CD8-positive, alpha-beta T cell (primary cell): ENCODE measurements at regions of chr2 and their contacts with region 1.

Region 1: DNA sequence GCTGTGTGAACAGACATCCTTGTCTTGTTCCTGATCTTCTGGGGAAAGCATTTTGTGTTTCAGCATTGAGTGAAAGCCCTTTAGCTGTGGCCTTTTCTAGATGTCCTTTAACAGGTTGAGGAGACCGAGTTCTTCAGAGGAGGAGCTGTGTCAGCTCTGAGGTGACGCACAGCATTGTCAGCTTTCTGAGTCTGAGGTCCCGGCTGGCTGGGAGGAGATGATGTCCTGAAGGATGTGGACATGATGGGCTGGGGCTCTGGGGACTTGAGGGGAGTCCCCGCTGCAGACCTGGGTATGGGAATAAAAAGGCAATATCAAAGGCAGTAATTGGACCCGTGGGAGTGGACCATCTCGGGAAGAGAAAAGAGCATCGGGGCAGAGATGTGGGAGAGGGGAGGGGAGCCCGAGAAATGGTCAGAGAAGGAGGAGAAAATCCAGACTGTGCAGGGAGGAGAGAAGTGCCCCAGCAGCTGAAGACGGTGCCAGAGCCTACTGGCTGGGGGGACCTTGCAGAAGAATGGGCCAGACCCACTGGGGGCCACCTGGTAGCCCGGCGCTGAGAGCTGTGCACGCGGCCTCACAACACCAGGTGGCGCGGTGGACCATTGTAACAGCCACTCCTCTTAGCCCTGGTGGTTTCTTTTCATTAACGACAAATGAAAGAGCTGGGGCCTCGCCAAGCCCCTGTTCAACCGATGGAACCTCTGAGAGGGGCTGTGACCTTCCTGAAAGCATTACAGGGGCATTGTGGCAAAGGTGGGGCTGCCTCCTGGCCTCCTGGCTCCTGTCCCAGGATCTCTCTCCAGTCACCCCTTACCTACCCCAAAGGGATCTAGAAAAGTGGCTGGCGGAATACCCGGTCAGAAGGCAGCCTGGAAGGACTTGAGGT is 61.6 kb downstream of the ST3GAL5 start:
- DNase-seq: peak; percentile 71 to 90 (median 82)
- ATAC-seq: peak; percentile 99
- H3K4me3 ChIP-seq: peak overlapping the region; percentile 1 to 37
- H3K4me3 Mint-ChIP-seq: no peak overlapping the region
- H3K27ac ChIP-seq: no peak overlapping the region
- H3K27ac Mint-ChIP-seq: peak overlapping the region; percentile 62
- H3K4me1 ChIP-seq: peaks cover 8% of the 10 kb centered on the region
- H3K4me1 Mint-ChIP-seq: peaks cover 15% of the 10 kb centered on the region
- H3K27me3 ChIP-seq: no peaks in the 10 kb centered on the region
- H3K27me3 Mint-ChIP-seq: no peaks in the 10 kb centered on the region
- CTCF ChIP-seq: peak; percentile 83

Region 2: DNA sequence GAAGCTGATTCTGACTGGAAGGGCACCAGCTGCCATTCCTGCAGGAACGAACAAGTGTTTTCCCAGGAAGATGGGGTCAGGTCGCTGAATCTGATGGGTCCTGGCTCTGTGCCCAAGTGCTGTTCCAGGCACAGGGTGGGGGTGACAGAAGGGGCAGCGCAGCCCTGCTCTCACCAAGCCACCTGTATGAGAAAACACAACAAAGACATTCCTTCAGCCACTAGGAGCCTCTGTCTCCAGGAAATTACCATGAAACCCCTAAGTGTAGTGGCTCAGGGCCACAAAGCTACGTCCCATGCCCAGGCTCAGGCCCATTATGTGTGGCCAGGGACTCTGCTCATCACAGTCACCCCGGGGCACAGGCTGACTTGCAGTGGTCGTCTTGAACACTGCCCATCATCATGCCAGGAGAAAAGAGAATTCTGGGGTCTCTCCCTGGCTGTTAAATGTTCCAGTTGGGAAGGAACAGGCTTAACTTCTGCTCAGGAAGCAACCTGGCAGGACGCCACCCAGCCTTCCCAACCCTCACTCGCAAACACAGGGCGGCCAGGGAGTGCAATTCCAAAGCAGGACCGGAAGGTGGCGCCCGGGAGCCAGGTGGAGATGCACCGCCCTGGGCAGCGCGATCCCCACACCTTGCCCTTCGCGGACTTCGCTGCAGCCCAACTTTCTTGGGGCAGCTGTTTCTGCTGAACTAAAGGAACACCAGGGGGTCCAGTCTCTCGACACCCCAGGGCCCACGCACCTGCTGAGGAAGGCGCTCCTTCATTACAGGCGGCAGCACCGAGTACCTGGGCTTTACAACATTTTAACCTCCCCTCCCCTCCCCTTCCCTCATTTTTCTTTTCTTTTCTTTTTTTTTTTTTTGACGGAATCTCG is 148.2 kb before region 1 on chr2:
- CTCF ChIA-PET with region 1: no interaction called
- POLR2A ChIA-PET with region 1: no interaction called
- intact Hi-C with region 1: no loop called
- DNase-seq: peak; percentile 59 to 85 (median 75)
- ATAC-seq: peak; percentile 98
- H3K4me3 ChIP-seq: peak overlapping the region in 1 of 2 experiments; percentile 19
- H3K4me3 Mint-ChIP-seq: no peak overlapping the region
- H3K27ac ChIP-seq: no peak overlapping the region
- H3K27ac Mint-ChIP-seq: no peak overlapping the region
- H3K4me1 ChIP-seq: peaks cover 7% of the 10 kb centered on the region
- H3K4me1 Mint-ChIP-seq: no peaks in the 10 kb centered on the region
- H3K27me3 ChIP-seq: no peaks in the 10 kb centered on the region
- H3K27me3 Mint-ChIP-seq: peaks cover 2% of the 10 kb centered on the region
- CTCF ChIP-seq: peak; percentile 91

Region 3: DNA sequence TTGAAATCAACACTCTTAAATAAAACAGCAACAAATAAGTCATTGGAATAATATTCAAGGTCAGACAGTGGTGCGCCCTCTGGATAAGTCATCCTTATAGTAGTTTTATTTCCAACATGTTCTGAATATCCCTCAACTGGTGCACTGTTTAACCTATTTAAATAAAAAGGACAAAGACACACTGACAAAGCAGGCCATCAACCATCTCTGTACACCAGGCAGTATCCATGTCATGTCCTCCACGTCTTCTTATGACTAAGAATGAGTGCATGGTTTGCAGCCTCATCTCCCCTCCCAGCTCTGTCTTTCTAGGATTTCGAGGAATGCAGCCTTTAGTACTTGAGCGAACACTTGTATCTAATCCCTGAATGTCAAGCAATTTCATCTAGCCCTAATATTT is 19.2 kb after region 1 on chr2:
- CTCF ChIA-PET with region 1: interaction called, 32 read pairs
- POLR2A ChIA-PET with region 1: no interaction called
- intact Hi-C with region 1: no loop called
- DNase-seq: no peak
- ATAC-seq: no peak
- H3K4me3 ChIP-seq: no peak overlapping the region
- H3K4me3 Mint-ChIP-seq: no peak overlapping the region
- H3K27ac ChIP-seq: no peak overlapping the region
- H3K27ac Mint-ChIP-seq: no peak overlapping the region
- H3K4me1 ChIP-seq: peaks cover 20% of the 10 kb centered on the region
- H3K4me1 Mint-ChIP-seq: peaks cover 30% of the 10 kb centered on the region
- H3K27me3 ChIP-seq: no peaks in the 10 kb centered on the region
- H3K27me3 Mint-ChIP-seq: no peaks in the 10 kb centered on the region
- CTCF ChIP-seq: no peak

Region 4: DNA sequence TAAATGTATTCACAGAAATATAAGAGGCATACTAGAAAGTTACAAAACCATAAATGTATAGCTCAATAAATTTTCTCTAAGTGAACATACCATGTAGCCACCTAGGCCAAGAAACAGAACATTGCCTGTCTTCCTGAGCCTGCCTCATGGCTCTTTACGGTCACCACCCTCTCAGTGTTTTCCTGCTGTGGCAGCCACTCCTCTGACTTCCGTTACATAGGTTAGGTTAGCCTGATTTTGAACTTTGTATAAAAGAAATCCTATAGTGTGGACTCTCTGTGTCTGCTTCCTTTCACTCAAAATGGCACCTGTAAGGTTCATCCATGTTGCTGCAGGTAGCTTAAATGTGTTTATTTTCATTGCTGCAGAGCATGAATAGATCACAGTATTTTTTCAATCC is 73.1 kb after region 1 on chr2:
- CTCF ChIA-PET with region 1: interaction called, 11 read pairs
- POLR2A ChIA-PET with region 1: no interaction called
- intact Hi-C with region 1: no loop called
- DNase-seq: peak in 1 of 9 experiments; percentile 40
- ATAC-seq: peak; percentile 58
- H3K4me3 ChIP-seq: no peak overlapping the region
- H3K4me3 Mint-ChIP-seq: no peak overlapping the region
- H3K27ac ChIP-seq: peak overlapping the region in 1 of 2 experiments; percentile 32
- H3K27ac Mint-ChIP-seq: peak overlapping the region; percentile 70
- H3K4me1 ChIP-seq: peaks cover 23% of the 10 kb centered on the region
- H3K4me1 Mint-ChIP-seq: peaks cover 33% of the 10 kb centered on the region
- H3K27me3 ChIP-seq: no peaks in the 10 kb centered on the region
- H3K27me3 Mint-ChIP-seq: no peaks in the 10 kb centered on the region
- CTCF ChIP-seq: no peak

Region 5: DNA sequence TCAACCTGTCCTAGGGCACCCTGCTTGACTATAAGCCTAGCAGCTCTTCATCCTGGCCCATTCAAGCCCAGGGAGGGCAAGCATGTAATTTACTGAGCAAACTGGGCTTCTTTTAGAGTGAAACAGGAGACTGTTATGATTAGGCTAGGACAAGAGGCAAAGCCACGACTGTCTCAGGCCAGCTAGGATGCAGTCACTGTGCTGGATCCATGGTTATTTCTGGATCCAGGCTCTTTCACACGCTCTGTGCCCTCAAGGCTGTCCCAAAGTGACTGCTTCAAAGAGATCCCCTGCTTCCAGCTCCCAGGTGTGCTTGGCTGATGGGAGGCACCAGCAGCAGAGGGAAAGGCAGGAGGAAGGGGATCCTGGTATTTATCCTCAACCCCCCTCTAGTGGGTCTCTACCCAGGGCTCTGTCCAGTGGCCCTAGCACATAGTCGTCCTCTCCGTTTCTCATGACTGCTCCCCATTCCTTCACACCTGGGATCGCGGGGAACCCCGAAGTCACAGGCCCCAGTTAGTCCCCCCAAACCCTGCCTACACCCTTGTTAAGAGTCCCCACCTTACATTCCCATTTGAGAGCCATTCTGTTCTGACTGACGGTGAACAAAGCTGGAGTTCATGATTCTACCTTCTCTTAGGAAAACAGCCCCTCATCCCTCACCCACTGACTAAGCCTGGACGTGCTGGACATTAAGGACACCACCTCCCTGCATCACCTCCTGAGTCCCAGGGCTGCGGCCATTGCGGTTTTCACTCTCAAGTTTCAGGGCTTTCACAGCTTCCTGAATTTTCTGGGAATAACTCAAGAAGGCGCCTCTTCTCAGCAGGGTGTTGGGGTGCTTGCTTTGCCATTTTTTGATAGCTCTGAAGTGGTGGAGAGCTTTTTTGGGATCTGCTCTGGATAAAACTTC is 215.3 kb after region 1 on chr2:
- CTCF ChIA-PET with region 1: interaction called, 26 read pairs
- POLR2A ChIA-PET with region 1: no interaction called
- intact Hi-C with region 1: no loop called
- DNase-seq: peak in 2 of 9 experiments; percentile 7 to 41
- ATAC-seq: no peak
- H3K4me3 ChIP-seq: no peak overlapping the region
- H3K4me3 Mint-ChIP-seq: no peak overlapping the region
- H3K27ac ChIP-seq: peak overlapping the region in 1 of 2 experiments; percentile 20
- H3K27ac Mint-ChIP-seq: peak overlapping the region; percentile 100
- H3K4me1 ChIP-seq: peaks cover 43% of the 10 kb centered on the region
- H3K4me1 Mint-ChIP-seq: peaks cover 45% of the 10 kb centered on the region
- H3K27me3 ChIP-seq: no peaks in the 10 kb centered on the region
- H3K27me3 Mint-ChIP-seq: no peaks in the 10 kb centered on the region
- CTCF ChIP-seq: no peak

Region 6: DNA sequence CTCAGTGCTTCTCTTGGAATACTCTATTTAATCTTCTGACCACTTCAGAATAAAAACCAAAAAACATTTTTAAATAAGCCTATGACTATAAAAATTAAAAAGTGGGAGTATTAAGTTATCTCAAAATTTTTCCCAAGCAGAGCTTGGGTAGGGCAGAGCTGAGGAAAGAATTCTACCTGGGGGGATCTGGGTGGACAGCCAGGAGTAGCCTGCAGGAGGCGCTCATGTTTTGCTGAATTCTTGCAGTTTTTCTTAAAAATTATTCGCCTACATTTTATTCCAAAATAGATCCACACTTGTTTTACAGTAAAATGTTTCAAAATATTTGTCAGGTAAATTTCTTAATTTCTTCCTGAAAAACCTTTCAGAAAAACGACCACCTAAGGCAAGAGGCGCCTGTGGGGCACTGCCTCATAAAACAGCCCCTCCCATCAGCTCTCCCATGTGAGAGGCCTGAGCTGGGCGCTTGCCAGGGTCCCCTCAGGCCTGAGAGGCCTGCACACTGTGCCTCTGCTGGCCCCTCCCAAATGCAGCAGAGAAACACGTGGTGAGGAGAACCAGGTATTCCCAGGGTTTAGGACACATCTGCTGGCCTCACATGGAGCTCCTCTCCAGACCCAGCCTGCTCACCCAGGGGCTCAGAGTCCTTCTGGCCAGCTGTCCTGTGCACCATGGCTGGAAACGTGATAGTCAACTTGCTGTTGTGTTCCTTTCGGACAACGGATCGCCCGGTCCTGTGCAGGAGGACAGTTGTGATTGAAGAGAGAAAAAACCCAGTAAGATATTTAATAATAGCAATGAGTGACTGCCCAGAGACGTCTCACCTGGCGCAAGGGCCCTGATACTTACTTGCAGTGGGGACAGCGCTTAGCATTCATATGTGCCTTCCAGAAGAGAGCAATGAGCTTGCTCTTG is 261.0 kb after region 1 on chr2:
- CTCF ChIA-PET with region 1: interaction called, 344 read pairs
- POLR2A ChIA-PET with region 1: no interaction called
- intact Hi-C with region 1: no loop called
- DNase-seq: no peak
- ATAC-seq: no peak
- H3K4me3 ChIP-seq: no peak overlapping the region
- H3K4me3 Mint-ChIP-seq: no peak overlapping the region
- H3K27ac ChIP-seq: no peak overlapping the region
- H3K27ac Mint-ChIP-seq: no peak overlapping the region
- H3K4me1 ChIP-seq: no peaks in the 10 kb centered on the region
- H3K4me1 Mint-ChIP-seq: no peaks in the 10 kb centered on the region
- H3K27me3 ChIP-seq: no peaks in the 10 kb centered on the region
- H3K27me3 Mint-ChIP-seq: no peaks in the 10 kb centered on the region
- CTCF ChIP-seq: peak; percentile 44